Body of pancreas (tissue), 4 donors: ENCODE measurements at regions of chr13 and their contacts with region 1.

Region 1: GRCh38 chr13:26179344-26179743 is 42.8 kb downstream of the RNF6 start:
- DNase-seq: no peak
- ATAC-seq: no peak
- H3K4me3 ChIP-seq: no peak overlapping the region
- H3K27ac ChIP-seq: no peak overlapping the region
- H3K4me1 ChIP-seq: no peaks in the 10 kb centered on the region
- H3K27me3 ChIP-seq: no peaks in the 10 kb centered on the region
- CTCF ChIP-seq: no peak
- POLR2A ChIP-seq: no peak

Region 2: GRCh38 chr13:26698392-26699196 is 519.2 kb after region 1 on chr13:
- intact Hi-C with region 1: loop called (anchors 5 kb)
- DNase-seq: peak; percentile 77 to 85 (median 82)
- ATAC-seq: peak; percentile 86
- H3K4me3 ChIP-seq: no peak overlapping the region
- H3K27ac ChIP-seq: no peak overlapping the region
- H3K4me1 ChIP-seq: peaks cover 7% of the 10 kb centered on the region
- H3K27me3 ChIP-seq: no peaks in the 10 kb centered on the region
- CTCF ChIP-seq: peak; percentile 92 to 96 (median 94)
- POLR2A ChIP-seq: no peak